ENCODE measurements at regions of chr1 and their contacts with region 1.

Region 1: DNA sequence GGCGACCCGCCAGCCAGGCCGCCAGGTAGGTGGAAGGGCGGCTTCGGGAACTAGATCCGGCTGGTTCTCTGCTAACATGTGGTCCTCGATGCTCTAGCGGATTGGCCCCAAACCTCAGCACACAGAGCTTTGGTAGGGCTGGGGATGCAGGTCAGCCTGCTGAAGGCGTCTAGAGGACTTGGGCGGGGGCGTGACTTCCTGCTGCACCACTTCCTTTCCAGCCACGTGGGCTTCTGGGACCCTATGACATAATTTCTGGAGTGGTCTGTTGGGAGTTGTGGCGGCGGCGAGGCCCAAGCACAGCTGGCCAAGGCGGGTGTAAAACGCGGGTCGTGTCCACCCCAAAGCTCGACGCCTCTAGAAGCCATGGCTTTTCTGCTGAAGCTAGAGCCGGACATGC is 124.5 kb downstream of the ATF6 start:
- DNase-seq: no peak
- ATAC-seq: no peak
- H3K4me3 ChIP-seq: no peak overlapping the region
- H3K27ac ChIP-seq: no peak overlapping the region
- H3K4me1 ChIP-seq: no peaks in the 10 kb centered on the region
- H3K27me3 ChIP-seq: no peaks in the 10 kb centered on the region
- CTCF ChIP-seq: no peak
- EP300 ChIP-seq: no peak
- POLR2A ChIP-seq: no peak; the same call in 1 of the 2 replicates
- RAD21 ChIP-seq: no peak

Region 2: GRCh38 chr1:161905269-161905884 is 14.8 kb after region 1 on chr1:
- CTCF ChIA-PET with region 1: interaction called, 10 read pairs
- POLR2A ChIA-PET with region 1: interaction called, 4 read pairs
- RAD21 ChIA-PET with region 1: no interaction called
- SMC1A ChIA-PET with region 1: interaction called, 3 read pairs
- in situ Hi-C with region 1: no loop called
- intact Hi-C with region 1: no loop called
- DNase-seq: no peak
- ATAC-seq: peak; percentile 91
- H3K4me3 ChIP-seq: no peak overlapping the region
- H3K27ac ChIP-seq: no peak overlapping the region
- H3K4me1 ChIP-seq: 0 out of 2 replicates have a peak, but pooled peaks cover 4% of the 10 kb centered on the region
- H3K27me3 ChIP-seq: no peaks in the 10 kb centered on the region
- CTCF ChIP-seq: peak; percentile 45 to 68 (median 53)
- EP300 ChIP-seq: no peak
- POLR2A ChIP-seq: no peak
- RAD21 ChIP-seq: peak; percentile 49

Region 3: GRCh38 chr1:161946071-161946987 is 55.8 kb after region 1 on chr1:
- CTCF ChIA-PET with region 1: no interaction called
- POLR2A ChIA-PET with region 1: no interaction called
- RAD21 ChIA-PET with region 1: no interaction called
- SMC1A ChIA-PET with region 1: no interaction called
- in situ Hi-C with region 1: no loop called
- intact Hi-C with region 1: no loop called
- DNase-seq: no peak
- ATAC-seq: no peak
- H3K4me3 ChIP-seq: no peak overlapping the region
- H3K27ac ChIP-seq: no peak overlapping the region
- H3K4me1 ChIP-seq: no peaks in the 10 kb centered on the region
- H3K27me3 ChIP-seq: no peaks in the 10 kb centered on the region
- CTCF ChIP-seq: no peak
- EP300 ChIP-seq: no peak
- POLR2A ChIP-seq: no peak
- RAD21 ChIP-seq: no peak

Measured in GM12878 (cell line).